Naive thymus-derived CD8-positive, alpha-beta T cell (primary cell): ENCODE measurements at regions of chr7 and their contacts with region 1.

Region 1: GRCh38 chr7:150520145-150520544 is 5.5 kb downstream of the GIMAP7 start:
- DNase-seq: peak in 4 of 10 donors; percentile 27 to 70 (median 36)
- ATAC-seq: peak; percentile 19 to 26
- H3K4me3 Mint-ChIP-seq: peak overlapping the region; percentile 91 to 100 (median 99)
- H3K27ac Mint-ChIP-seq: peak overlapping the region; percentile 87 to 99 (median 94)
- H3K4me1 Mint-ChIP-seq: peaks cover 16 to 43% (median 35%) of the 10 kb centered on the region in 4 donors
- H3K27me3 Mint-ChIP-seq: no peaks in the 10 kb centered on the region

Region 2: DNA sequence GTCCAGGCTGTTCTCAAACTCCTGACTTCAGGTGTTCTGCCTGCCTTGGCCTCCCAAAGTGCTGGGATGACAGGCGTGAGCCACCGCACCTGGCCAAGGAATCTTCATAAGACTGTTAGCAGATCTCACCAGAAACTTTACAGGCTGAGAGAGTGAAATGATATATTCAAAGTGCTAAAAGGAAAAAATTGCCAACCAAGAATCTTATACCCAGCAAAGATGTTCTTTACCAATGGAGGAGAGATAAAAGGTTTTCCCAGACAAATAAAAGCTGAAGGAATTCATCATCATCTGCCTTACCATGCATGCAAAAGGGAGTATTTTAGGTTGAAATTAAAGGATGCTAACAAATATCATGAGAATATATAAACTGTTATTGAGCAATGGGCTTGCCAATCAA is 18.1 kb after region 1 on chr7:
- POLR2A ChIA-PET with region 1: interaction called, 10 read pairs
- DNase-seq: no peak
- ATAC-seq: no peak
- H3K4me3 Mint-ChIP-seq: no peak overlapping the region
- H3K27ac Mint-ChIP-seq: no peak overlapping the region
- H3K4me1 Mint-ChIP-seq: peaks cover 4 to 32% (median 15%) of the 10 kb centered on the region in 4 donors
- H3K27me3 Mint-ChIP-seq: no peaks in the 10 kb centered on the region

Region 3: DNA sequence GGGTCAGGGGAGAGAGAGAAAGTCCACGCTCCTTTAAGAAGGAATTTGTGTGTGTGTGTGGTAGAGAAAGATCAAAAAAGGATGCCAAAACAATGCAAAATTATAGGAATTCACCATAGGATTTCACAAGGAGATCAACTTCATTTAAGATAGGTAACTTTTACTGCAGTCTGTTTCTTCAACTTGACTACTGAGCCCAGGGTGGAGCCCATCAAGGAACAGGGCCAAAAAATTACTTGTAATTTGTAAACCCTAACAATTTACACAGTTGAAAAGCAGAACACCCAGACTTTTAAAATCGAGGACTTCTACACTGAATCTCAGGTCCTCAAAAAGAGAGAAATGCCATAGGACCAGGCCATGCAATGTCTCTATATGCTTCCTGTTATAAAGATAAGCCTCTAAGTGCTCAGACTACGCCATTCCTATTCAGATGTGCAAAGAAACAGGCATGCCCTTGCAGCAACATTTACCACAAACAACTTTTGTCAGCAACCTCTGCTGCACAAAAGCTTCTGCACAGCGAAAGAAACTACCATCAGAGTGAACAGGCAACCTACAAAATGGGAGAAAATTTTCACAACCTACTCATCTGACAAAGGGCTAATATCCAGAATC is 36.5 kb after region 1 on chr7:
- POLR2A ChIA-PET with region 1: interaction called, 550 read pairs
- DNase-seq: peak in 5 of 10 donors; percentile 41 to 76 (median 68)
- ATAC-seq: peak; percentile 96 to 97
- H3K4me3 Mint-ChIP-seq: peak overlapping the region; percentile 48 to 87 (median 82)
- H3K27ac Mint-ChIP-seq: peak overlapping the region; percentile 84 to 99 (median 96)
- H3K4me1 Mint-ChIP-seq: peaks cover 43 to 87% (median 86%) of the 10 kb centered on the region in 4 donors
- H3K27me3 Mint-ChIP-seq: no peaks in the 10 kb centered on the region

Region 4: GRCh38 chr7:150737265-150738055 is 217.3 kb after region 1 on chr7 and contains the start of gene GIMAP5:
- POLR2A ChIA-PET with region 1: interaction called, 67 read pairs
- DNase-seq: peak in 6 of 10 donors; percentile 27 to 60 (median 40)
- ATAC-seq: peak; percentile 67 to 76
- H3K4me3 Mint-ChIP-seq: peak within 1 kb of the TSS; percentile 88 to 100 (median 98)
- H3K27ac Mint-ChIP-seq: peak within 1 kb of the TSS; percentile 93 to 100 (median 96)
- H3K4me1 Mint-ChIP-seq: peaks cover 48 to 75% (median 68%) of the 10 kb centered on the region in 4 donors
- H3K27me3 Mint-ChIP-seq: no peaks in the 10 kb centered on the region
- polyA plus RNA-seq, gene GIMAP5: 320 to 506 (median 401) TPM

Region 5: GRCh38 chr7:150830937-150831336 is 310.8 kb after region 1 on chr7:
- POLR2A ChIA-PET with region 1: no interaction called
- DNase-seq: no peak
- ATAC-seq: no peak
- H3K4me3 Mint-ChIP-seq: no peak overlapping the region
- H3K27ac Mint-ChIP-seq: peak overlapping the region in 1 of 10 donors; percentile 35
- H3K4me1 Mint-ChIP-seq: no peaks in the 10 kb centered on the region
- H3K27me3 Mint-ChIP-seq: peaks cover 21 to 55% (median 36%) of the 10 kb centered on the region in 5 donors